GM18951 (cell line): ENCODE measurements at regions of chr17 and their contacts with region 1.

Region 1: DNA sequence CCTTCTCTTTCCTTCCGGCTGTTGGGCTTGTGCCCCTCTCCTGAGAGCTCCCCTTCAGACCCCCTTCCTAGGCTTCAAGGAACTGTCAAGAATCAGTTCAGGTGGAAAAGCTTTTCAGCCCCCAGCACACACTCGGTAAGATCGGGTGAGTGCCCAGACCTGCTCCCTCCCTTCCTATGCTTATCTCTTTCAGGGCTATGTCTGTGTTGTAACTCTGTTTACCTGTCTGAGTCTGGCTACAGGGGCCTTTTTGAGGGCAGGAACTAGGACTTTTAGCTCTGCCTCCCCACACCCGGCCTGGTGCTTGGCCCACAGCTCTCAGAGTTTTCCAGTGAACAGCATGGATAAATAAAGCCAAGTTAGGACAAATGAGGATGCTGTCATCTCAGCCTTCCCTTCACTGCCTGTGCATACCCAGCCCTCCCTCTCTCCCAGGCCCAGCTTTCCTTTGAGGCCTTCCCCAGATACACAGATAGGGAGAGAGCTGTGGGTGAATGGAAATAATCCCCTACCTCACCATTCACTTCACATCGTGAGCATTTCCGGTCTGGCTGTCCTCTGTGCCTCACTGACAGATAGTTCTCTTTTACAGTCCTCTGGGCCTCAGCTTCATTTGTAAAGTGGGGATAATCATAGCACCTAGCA is 5.7 kb upstream of the MRPS23 start:
- POLR2A ChIP-seq: no peak

Region 2: GRCh38 chr17:57995076-57995956 is 139.8 kb after region 1 on chr17:
- in situ Hi-C with region 1: loop called (anchors 5 kb)
- POLR2A ChIP-seq: no peak